Endothelial cell of umbilical vein (primary cell): ENCODE measurements at regions of chr5 and their contacts with region 1.

Region 1: GRCh38 chr5:14190194-14191164 is 47.3 kb downstream of the TRIO start:
- DNase-seq: peak; percentile 93
- H3K4me3 ChIP-seq: no peak overlapping the region
- H3K27ac ChIP-seq: peak overlapping the region; percentile 74
- H3K4me1 ChIP-seq: peaks cover 86% of the 10 kb centered on the region
- H3K27me3 ChIP-seq: no peaks in the 10 kb centered on the region
- CTCF ChIP-seq: no peak
- POLR2A ChIP-seq: no peak

Region 2: GRCh38 chr5:14156650-14157493 is 33.6 kb before region 1 on chr5:
- CTCF ChIA-PET with region 1: interaction called, 6 read pairs
- POLR2A ChIA-PET with region 1: interaction called, 6 read pairs
- dilution Hi-C with region 1: no loop called
- intact Hi-C with region 1: loop called (anchors 1 kb)
- DNase-seq: peak; percentile 91
- H3K4me3 ChIP-seq: peak overlapping the region in 1 of 3 experiments; percentile 49
- H3K27ac ChIP-seq: peak overlapping the region; percentile 97
- H3K4me1 ChIP-seq: peaks cover 55% of the 10 kb centered on the region
- H3K27me3 ChIP-seq: no peaks in the 10 kb centered on the region
- CTCF ChIP-seq: no peak
- POLR2A ChIP-seq: no peak